Dendritic cell treated with granulocyte-macrophage colony-stimulating factor and Interleukin-4, amounts not matched to agents 40 ng/mL and 50 ng/mL, for 4 days (primary cell): ENCODE measurements at regions of chr19 and their contacts with region 1.

Region 1: GRCh38 chr19:48492925-48493717 is 18.5 kb downstream of the LMTK3 start:
- H3K4me3 Mint-ChIP-seq: peak overlapping the region; percentile 82
- H3K27ac Mint-ChIP-seq: peak overlapping the region; percentile 90
- H3K4me1 Mint-ChIP-seq: peaks cover 49% of the 10 kb centered on the region
- H3K27me3 Mint-ChIP-seq: peaks cover 65% of the 10 kb centered on the region

Region 2: GRCh38 chr19:48445606-48446481 is 47.3 kb before region 1 on chr19 and contains the start of gene GRWD1:
- intact Hi-C with region 1: no loop called
- H3K4me3 Mint-ChIP-seq: peak within 1 kb of the TSS; percentile 96
- H3K27ac Mint-ChIP-seq: peak within 1 kb of the TSS; percentile 98
- H3K4me1 Mint-ChIP-seq: peaks cover 38% of the 10 kb centered on the region
- H3K27me3 Mint-ChIP-seq: peaks cover 30% of the 10 kb centered on the region

Region 3: DNA sequence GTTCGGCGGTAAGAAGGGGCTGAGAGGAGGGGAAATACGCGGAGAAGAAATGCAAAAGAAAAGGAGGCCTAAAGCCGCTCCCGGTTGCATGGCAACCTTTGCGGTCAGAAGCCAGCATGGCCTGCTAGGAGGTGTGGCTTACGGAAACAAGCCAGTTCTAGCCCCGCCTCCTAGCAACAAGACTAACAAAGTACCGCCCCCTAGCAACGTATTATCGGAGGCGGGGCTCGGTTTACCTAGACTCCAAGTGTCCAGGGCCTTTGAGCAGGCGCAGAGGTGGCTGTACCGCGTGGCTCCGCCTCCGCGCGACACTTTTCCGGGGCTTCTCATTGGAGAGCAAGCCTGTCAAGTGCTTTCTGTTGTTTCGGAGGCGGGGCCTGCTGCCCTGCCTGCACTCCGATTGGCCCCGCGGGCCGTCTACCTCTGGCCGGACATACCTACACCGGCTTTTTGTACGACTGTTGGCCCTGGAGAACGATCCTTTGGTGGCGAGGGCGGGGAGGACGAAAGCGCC is 24.3 kb before region 1 on chr19:
- intact Hi-C with region 1: loop called (anchors 1 kb)
- H3K4me3 Mint-ChIP-seq: peak overlapping the region; percentile 80
- H3K27ac Mint-ChIP-seq: peak overlapping the region; percentile 87
- H3K4me1 Mint-ChIP-seq: peaks cover 47% of the 10 kb centered on the region
- H3K27me3 Mint-ChIP-seq: peaks cover 1% of the 10 kb centered on the region

Region 4: GRCh38 chr19:48588670-48589399 is 95.7 kb after region 1 on chr19:
- intact Hi-C with region 1: loop called (anchors 1 kb)
- H3K4me3 Mint-ChIP-seq: peak overlapping the region; percentile 77
- H3K27ac Mint-ChIP-seq: peak overlapping the region; percentile 77
- H3K4me1 Mint-ChIP-seq: peaks cover 20% of the 10 kb centered on the region
- H3K27me3 Mint-ChIP-seq: peaks cover 18% of the 10 kb centered on the region

Region 5: DNA sequence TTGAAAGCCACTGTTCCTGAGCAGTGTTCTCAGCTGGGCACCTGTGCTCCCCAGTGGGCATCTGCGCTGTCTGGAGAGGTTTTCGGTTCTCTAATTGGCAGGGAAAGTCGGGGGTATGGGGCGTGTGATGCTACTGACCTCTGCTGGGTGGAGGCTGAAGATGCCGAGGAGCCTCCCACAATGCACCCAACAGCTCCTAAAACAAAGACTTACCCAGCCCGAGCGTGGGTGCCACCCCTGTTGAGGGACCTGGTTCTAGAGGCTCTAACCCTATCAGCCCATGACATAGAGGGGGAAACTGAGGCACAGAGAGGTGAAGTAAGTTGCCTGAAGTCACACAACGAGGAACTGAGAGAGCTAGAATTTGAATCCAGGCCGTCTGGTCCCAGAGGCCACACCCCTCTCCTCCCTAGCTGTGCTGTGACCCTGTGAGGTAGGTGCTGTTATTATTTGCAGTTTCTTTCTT is 115.7 kb after region 1 on chr19:
- intact Hi-C with region 1: loop called (anchors 5 kb)
- H3K4me3 Mint-ChIP-seq: no peak overlapping the region
- H3K27ac Mint-ChIP-seq: no peak overlapping the region
- H3K4me1 Mint-ChIP-seq: peaks cover 12% of the 10 kb centered on the region
- H3K27me3 Mint-ChIP-seq: no peaks in the 10 kb centered on the region